Dendritic cell treated with granulocyte-macrophage colony-stimulating factor and Interleukin-4, amounts not matched to agents 40 ng/mL and 50 ng/mL, for 4 days (primary cell): ENCODE measurements at regions of chr16 and their contacts with region 1.

Region 1: GRCh38 chr16:31920373-31920772 is 46.8 kb downstream of the ZNF267 start:
- H3K4me3 Mint-ChIP-seq: no peak overlapping the region
- H3K27ac Mint-ChIP-seq: no peak overlapping the region
- H3K4me1 Mint-ChIP-seq: no peaks in the 10 kb centered on the region
- H3K27me3 Mint-ChIP-seq: no peaks in the 10 kb centered on the region

Region 2: GRCh38 chr16:31754998-31755615 is 165.3 kb before region 1 on chr16:
- intact Hi-C with region 1: loop called (anchors 10 kb)
- H3K4me3 Mint-ChIP-seq: no peak overlapping the region
- H3K27ac Mint-ChIP-seq: no peak overlapping the region
- H3K4me1 Mint-ChIP-seq: no peaks in the 10 kb centered on the region
- H3K27me3 Mint-ChIP-seq: no peaks in the 10 kb centered on the region

Region 3: DNA sequence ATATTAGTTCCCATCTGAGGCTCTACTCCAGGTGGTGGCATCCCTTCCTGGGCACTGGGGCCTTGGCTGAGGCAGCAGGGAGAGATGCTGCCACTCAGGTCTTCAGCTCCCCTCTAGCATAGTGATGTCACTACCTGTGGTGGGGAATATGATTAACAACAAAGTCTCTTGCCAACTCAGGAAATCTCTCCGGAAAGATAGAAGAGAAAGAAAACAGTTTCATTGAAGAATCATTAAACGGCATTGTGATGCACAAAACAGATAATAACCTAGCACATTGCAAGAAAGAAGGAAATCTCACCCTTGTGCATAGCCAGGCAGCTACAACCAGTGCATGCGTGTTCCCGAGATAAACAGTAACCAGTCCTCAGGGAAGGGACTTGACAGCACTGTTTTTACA is 58.9 kb before region 1 on chr16:
- intact Hi-C with region 1: no loop called
- H3K4me3 Mint-ChIP-seq: no peak overlapping the region
- H3K27ac Mint-ChIP-seq: no peak overlapping the region
- H3K4me1 Mint-ChIP-seq: peaks cover 5% of the 10 kb centered on the region
- H3K27me3 Mint-ChIP-seq: peaks cover 11% of the 10 kb centered on the region

Region 4: GRCh38 chr16:31888735-31889134 is 31.6 kb before region 1 on chr16:
- intact Hi-C with region 1: loop called (anchors 5 kb)
- H3K4me3 Mint-ChIP-seq: no peak overlapping the region
- H3K27ac Mint-ChIP-seq: peak overlapping the region; percentile 32
- H3K4me1 Mint-ChIP-seq: peaks cover 54% of the 10 kb centered on the region
- H3K27me3 Mint-ChIP-seq: no peaks in the 10 kb centered on the region